Activated T-helper 2 cell treated with anti-CD3 and anti-CD28 coated beads, Interferon-gamma antibody, Interleukin-2, Interleukin-4, amounts not matched to agents 10 μg/mL and 5 μg/mL and 100 μg/mL, durations not matched to agents 14 hours and 24 hours and 36 hours (primary cell): ENCODE measurements at regions of chr9 and their contacts with region 1.

Region 1: GRCh38 chr9:124869986-124870560 is 8.1 kb downstream of the ARPC5L start:
- DNase-seq: peak; percentile 71
- H3K4me3 Mint-ChIP-seq: peak overlapping the region; percentile 99
- H3K27ac Mint-ChIP-seq: peak overlapping the region; percentile 98
- H3K4me1 Mint-ChIP-seq: peaks cover 39% of the 10 kb centered on the region
- H3K27me3 Mint-ChIP-seq: no peaks in the 10 kb centered on the region

Region 2: GRCh38 chr9:124551472-124552272 is 318.4 kb before region 1 on chr9:
- intact Hi-C with region 1: no loop called
- DNase-seq: no peak
- H3K4me3 Mint-ChIP-seq: no peak overlapping the region
- H3K27ac Mint-ChIP-seq: no peak overlapping the region
- H3K4me1 Mint-ChIP-seq: no peaks in the 10 kb centered on the region
- H3K27me3 Mint-ChIP-seq: peaks cover 10% of the 10 kb centered on the region

Region 3: GRCh38 chr9:124894741-124895170 is 24.7 kb after region 1 on chr9:
- intact Hi-C with region 1: loop called (anchors 2 kb)
- DNase-seq: peak; percentile 16
- H3K4me3 Mint-ChIP-seq: no peak overlapping the region
- H3K27ac Mint-ChIP-seq: peak overlapping the region; percentile 0
- H3K4me1 Mint-ChIP-seq: peaks cover 4% of the 10 kb centered on the region
- H3K27me3 Mint-ChIP-seq: no peaks in the 10 kb centered on the region

Region 4: DNA sequence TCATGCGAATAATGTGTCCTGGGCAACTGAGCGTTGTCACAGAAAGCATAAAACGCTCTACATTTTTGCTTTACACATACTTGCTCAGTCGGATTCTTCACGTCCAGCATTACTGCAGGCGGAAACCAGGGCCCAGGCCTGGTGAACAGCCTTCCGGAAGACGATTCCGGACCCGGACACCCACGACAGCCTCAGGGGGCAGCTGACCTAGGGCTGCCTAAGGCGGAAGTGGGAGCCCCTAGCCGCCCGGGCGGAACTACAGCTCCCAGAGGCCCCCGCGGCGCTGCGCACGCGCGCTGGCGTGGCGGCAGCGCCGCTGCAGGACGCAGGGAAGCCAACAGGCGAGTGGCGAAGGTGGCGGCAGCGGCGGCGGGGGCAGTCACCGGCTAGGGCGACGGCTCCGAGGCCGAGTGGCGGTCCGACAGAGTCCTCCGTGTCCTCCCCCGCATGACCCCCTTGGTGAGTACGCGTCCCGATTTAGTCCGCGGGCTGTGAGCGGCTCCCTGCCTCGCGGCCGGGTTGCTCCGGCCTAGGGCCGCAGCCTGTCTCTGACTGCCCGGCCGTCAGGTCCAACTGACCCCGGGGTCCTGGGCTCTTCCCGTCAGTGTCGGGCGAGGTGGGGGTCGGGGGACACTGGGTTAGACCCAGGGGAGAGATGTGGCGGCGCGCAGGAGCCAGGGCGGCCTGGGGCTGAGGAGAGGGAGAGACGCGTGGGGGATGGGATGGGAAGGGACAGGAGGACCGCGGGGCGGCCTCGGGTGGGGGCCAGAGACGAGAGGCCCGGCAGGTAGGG is 391.6 kb after region 1 on chr9 and contains the start of gene GAPVD1:
- intact Hi-C with region 1: loop called (anchors 2 kb)
- DNase-seq: peak; percentile 86
- H3K4me3 Mint-ChIP-seq: peak within 1 kb of the TSS; percentile 98
- H3K27ac Mint-ChIP-seq: peak within 1 kb of the TSS; percentile 90
- H3K4me1 Mint-ChIP-seq: peaks cover 32% of the 10 kb centered on the region
- H3K27me3 Mint-ChIP-seq: peaks cover 2% of the 10 kb centered on the region
- total RNA-seq, gene GAPVD1: 50.8 and 51.0 TPM in 2 replicates